ENCODE measurements at regions of chrX and their contacts with region 1.

Region 1: DNA sequence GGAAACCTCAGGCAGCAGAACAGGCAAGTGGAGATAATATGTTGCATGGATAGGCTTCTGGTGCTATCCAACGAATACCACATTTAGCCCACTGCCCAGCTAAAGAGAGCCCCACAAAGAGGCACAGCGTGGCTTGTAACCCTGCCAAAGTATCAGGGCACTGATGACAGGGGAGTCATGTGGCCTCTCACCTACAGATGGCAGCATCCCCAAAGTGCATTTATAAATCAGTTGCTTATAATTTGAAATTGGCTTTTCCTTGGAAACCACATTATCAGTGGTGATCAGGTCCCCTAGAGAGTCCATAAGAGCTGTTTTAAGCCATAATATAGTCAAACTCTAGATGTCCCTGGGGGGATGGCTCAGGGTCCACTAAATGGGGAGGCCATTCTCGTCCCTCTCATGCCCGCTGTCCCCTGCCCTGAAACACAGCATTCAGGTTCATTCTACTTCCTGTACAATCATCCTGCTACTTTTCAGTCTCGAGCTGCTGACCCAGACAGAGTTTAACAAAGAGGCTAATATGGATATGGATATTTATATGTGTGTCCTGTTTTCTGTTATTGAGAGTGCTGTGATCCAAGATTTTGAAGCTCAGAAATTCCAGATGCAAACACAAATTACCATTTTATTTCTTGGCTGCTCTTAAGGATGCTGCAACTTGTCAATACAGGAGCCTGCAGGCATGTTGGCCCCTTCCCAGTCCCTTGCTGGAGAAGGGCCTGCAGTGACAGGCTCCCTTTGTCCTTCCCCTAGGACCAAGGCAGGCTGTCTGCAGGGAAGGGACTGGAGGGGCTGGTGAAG is 28.5 kb downstream of the SRPX start:
- DNase-seq: peak in 2 of 9 experiments; percentile 2 to 3
- ATAC-seq: no peak
- H3K4me3 ChIP-seq: no peak overlapping the region
- H3K4me3 Mint-ChIP-seq: no peak overlapping the region
- H3K27ac ChIP-seq: no peak overlapping the region
- H3K27ac Mint-ChIP-seq: no peak overlapping the region
- H3K4me1 ChIP-seq: no peaks in the 10 kb centered on the region
- H3K4me1 Mint-ChIP-seq: no peaks in the 10 kb centered on the region
- H3K27me3 ChIP-seq: no peaks in the 10 kb centered on the region
- H3K27me3 Mint-ChIP-seq: peaks cover 10% of the 10 kb centered on the region
- CTCF ChIP-seq: no peak

Region 2: GRCh38 chrX:37722595-37722994 is 469.6 kb before region 1 on chrX:
- CTCF ChIA-PET with region 1: no interaction called
- POLR2A ChIA-PET with region 1: no interaction called
- intact Hi-C with region 1: no loop called
- DNase-seq: no peak
- ATAC-seq: no peak
- H3K4me3 ChIP-seq: no peak overlapping the region
- H3K4me3 Mint-ChIP-seq: no peak overlapping the region
- H3K27ac ChIP-seq: no peak overlapping the region
- H3K27ac Mint-ChIP-seq: no peak overlapping the region
- H3K4me1 ChIP-seq: no peaks in the 10 kb centered on the region
- H3K4me1 Mint-ChIP-seq: no peaks in the 10 kb centered on the region
- H3K27me3 ChIP-seq: no peaks in the 10 kb centered on the region
- H3K27me3 Mint-ChIP-seq: peaks cover 4% of the 10 kb centered on the region
- CTCF ChIP-seq: no peak

Region 3: DNA sequence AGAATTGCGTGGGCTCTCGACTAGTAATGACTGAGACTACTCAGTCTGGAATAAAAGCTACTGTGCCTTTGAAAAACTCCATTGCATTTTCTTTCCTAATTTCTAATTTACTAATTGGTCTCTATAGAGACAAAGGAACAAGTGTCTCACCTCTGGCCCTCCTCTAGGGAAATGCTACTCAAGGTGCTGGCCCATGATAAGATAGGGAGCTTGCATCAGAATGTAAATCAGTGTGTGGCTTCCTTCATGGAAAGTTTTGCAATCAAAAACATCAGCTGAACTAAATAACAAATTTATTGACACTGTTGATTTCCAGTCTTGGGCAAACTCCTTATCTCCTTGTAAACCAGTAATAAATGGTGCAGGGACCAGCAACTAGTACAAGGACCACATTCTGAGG is 53.3 kb before region 1 on chrX:
- CTCF ChIA-PET with region 1: no interaction called
- POLR2A ChIA-PET with region 1: no interaction called
- intact Hi-C with region 1: loop called in 1 of 2 experiments (anchors 10 kb)
- DNase-seq: no peak
- ATAC-seq: no peak
- H3K4me3 ChIP-seq: no peak overlapping the region
- H3K4me3 Mint-ChIP-seq: no peak overlapping the region
- H3K27ac ChIP-seq: no peak overlapping the region
- H3K27ac Mint-ChIP-seq: no peak overlapping the region
- H3K4me1 ChIP-seq: no peaks in the 10 kb centered on the region
- H3K4me1 Mint-ChIP-seq: no peaks in the 10 kb centered on the region
- H3K27me3 ChIP-seq: no peaks in the 10 kb centered on the region
- H3K27me3 Mint-ChIP-seq: no peaks in the 10 kb centered on the region
- CTCF ChIP-seq: no peak

Measured in CD8-positive, alpha-beta T cell (primary cell).